Mammary epithelial cell (primary cell): ENCODE measurements at regions of chr11 and their contacts with region 1.

Region 1: GRCh38 chr11:74449369-74449931 is 17.9 kb downstream of the KCNE3 start:
- DNase-seq: peak; percentile 60
- H3K4me3 ChIP-seq: no peak overlapping the region
- H3K27ac ChIP-seq: no peak overlapping the region
- H3K4me1 ChIP-seq: no peaks in the 10 kb centered on the region
- H3K27me3 ChIP-seq: no peaks in the 10 kb centered on the region
- CTCF ChIP-seq: peak; percentile 67 to 74

Region 2: GRCh38 chr11:74269161-74269811 is 180.2 kb before region 1 on chr11:
- CTCF ChIA-PET with region 1: no interaction called
- dilution Hi-C with region 1: no loop called
- in situ Hi-C with region 1: loop called in 1 of 2 experiments (anchors 5 kb)
- intact Hi-C with region 1: no loop called
- DNase-seq: no peak
- H3K4me3 ChIP-seq: no peak overlapping the region
- H3K27ac ChIP-seq: no peak overlapping the region
- H3K4me1 ChIP-seq: peaks cover 12% of the 10 kb centered on the region
- H3K27me3 ChIP-seq: no peaks in the 10 kb centered on the region
- CTCF ChIP-seq: no peak

Region 3: GRCh38 chr11:74388678-74389327 is 60.6 kb before region 1 on chr11:
- CTCF ChIA-PET with region 1: interaction called, 13 read pairs
- dilution Hi-C with region 1: no loop called
- in situ Hi-C with region 1: loop called in 1 of 2 experiments (anchors 5 kb)
- intact Hi-C with region 1: loop called (anchors 1 kb)
- DNase-seq: peak; percentile 51
- H3K4me3 ChIP-seq: no peak overlapping the region
- H3K27ac ChIP-seq: no peak overlapping the region
- H3K4me1 ChIP-seq: peaks cover 4% of the 10 kb centered on the region
- H3K27me3 ChIP-seq: no peaks in the 10 kb centered on the region
- CTCF ChIP-seq: peak; percentile 67 to 80

Region 4: DNA sequence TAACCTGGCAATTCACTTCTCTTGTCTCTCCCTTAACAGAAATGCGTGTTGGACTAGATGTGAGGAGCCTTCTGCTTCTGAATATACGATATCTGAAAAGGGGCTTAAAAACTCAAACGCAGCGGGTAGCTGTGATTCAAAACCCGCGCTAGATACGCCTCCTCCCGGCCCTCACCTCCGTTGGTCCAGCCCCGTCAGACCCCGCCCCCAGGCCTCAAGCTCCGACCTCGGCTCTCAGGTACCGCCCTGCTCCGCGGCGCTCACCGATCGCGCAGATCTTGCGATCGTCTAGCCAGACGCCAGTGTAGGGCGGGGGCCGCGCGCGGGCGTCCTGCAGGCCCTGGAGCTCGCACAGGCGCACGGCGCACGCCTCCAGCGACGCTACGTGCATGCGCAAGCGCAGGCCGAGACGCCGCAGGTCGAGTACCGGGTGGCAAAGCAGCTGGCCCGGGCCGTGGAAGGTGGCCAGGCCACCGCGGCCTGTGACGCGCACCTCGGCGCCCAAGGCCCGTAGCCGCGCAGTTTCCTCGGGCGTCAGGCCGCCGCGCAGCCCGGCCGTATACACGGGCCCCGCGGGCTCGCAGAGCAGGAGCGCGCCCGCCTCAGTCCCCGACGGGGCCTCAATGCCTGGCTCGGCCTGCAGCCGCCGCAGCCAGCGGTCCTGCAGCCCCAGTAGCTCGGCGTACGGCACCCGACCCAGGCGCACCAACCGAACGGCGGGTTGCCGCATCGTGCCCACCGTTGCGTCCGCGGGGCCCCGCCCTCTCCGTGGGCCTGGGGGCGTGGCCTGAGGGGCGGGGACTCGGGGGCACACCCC is 43.7 kb after region 1 on chr11 and contains the start of gene LIPT2:
- CTCF ChIA-PET with region 1: no interaction called
- dilution Hi-C with region 1: no loop called
- in situ Hi-C with region 1: no loop called
- intact Hi-C with region 1: no loop called
- DNase-seq: peak; percentile 98
- H3K4me3 ChIP-seq: peak within 1 kb of the TSS; percentile 80 to 88 (median 82)
- H3K27ac ChIP-seq: peak within 1 kb of the TSS; percentile 82
- H3K4me1 ChIP-seq: peaks cover 16% of the 10 kb centered on the region
- H3K27me3 ChIP-seq: no peaks in the 10 kb centered on the region
- CTCF ChIP-seq: no peak
- total RNA-seq, gene LIPT2: 4.3 to 5.0 TPM